Activated CD4-positive, alpha-beta T cell treated with anti-CD3 and anti-CD28 coated beads, Interleukin-2, amount 10 ng/mL, durations not matched to agents 24 days and 14 days (primary cell): ENCODE measurements at regions of chr15 and their contacts with region 1.

Region 1: DNA sequence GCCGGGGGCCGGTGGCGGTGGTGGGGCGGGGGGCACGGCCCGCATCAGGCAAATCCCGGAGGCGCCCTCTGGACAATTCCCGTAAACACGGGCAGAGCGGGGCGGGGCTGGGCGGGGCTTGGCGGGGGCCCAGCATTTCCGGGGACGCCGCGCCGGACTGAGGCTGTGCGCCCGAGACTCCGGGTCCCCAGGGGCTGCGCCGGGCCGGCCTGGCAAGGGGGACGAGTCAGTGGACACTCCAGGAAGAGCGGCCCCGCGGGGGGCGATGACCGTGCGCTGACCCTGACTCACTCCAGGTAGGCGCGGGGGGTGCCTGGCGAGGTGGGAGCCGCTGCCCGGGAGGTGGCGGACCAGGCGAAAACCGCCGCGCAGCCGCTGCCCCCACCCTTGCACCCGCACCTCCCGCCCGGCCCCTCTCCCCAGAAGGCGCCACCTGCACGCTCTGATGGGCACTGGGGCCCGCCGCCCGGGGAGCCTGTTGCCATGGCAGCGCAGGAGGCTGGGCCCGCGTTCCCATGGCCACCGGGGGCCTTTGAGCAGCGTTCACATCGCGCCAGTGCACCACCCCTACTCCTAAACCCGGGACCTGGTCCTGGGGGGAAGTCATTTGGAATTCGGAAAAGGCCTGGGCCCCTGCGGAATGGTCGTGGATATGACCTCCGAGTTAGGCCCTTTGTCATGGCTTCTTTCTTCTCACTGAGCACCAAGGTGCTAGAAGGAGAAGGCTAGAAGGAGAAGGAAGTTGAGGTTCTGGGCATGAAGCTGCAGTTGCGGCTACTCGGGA is 16.2 kb upstream of the SEMA4B start:
- DNase-seq: peak; percentile 91
- H3K4me3 Mint-ChIP-seq: peak overlapping the region; percentile 94
- H3K27ac Mint-ChIP-seq: peak overlapping the region; percentile 85
- H3K4me1 Mint-ChIP-seq: peaks cover 26% of the 10 kb centered on the region
- H3K27me3 Mint-ChIP-seq: peaks cover 2% of the 10 kb centered on the region

Region 2: DNA sequence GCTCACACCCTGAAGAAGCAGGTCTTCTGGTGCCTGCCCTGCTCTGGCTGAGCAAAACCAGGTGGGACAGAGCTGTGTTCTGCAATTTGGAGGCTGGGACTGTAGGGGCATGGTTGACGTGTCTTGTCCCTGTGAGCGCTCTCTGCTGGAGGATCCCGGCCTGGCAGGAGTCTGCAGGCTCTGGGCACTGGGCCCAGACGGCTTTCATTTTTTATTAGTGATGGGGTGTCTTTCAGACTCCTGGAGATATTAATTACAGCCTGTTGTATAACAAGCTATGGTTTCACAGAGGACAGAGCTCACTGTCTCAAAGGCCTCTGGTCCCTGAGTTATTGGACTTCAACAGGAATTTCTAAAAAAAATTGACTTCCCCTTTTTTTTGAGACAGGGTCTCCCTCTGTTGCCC is 213.4 kb before region 1 on chr15:
- intact Hi-C with region 1: no loop called
- DNase-seq: peak; percentile 82
- H3K4me3 Mint-ChIP-seq: no peak overlapping the region
- H3K27ac Mint-ChIP-seq: no peak overlapping the region
- H3K4me1 Mint-ChIP-seq: no peaks in the 10 kb centered on the region
- H3K27me3 Mint-ChIP-seq: peaks cover 13% of the 10 kb centered on the region

Region 3: GRCh38 chr15:90165659-90166421 is 19.1 kb before region 1 on chr15:
- intact Hi-C with region 1: no loop called
- DNase-seq: peak; percentile 75
- H3K4me3 Mint-ChIP-seq: peak overlapping the region; percentile 43
- H3K27ac Mint-ChIP-seq: peak overlapping the region; percentile 80
- H3K4me1 Mint-ChIP-seq: peaks cover 28% of the 10 kb centered on the region
- H3K27me3 Mint-ChIP-seq: peaks cover 4% of the 10 kb centered on the region

Region 4: GRCh38 chr15:90201130-90201949 is 16.4 kb after region 1 on chr15 and contains the start of gene SEMA4B:
- intact Hi-C with region 1: loop called (anchors 2 kb)
- DNase-seq: peak; percentile 94
- H3K4me3 Mint-ChIP-seq: peak within 1 kb of the TSS; percentile 90
- H3K27ac Mint-ChIP-seq: peak within 1 kb of the TSS; percentile 71
- H3K4me1 Mint-ChIP-seq: peaks cover 25% of the 10 kb centered on the region
- H3K27me3 Mint-ChIP-seq: peaks cover 2% of the 10 kb centered on the region
- total RNA-seq, gene SEMA4B: 17.5 and 18.9 TPM in 2 replicates

Region 5: GRCh38 chr15:90249203-90249863 is 64.4 kb after region 1 on chr15 and contains the start of gene TTLL13:
- intact Hi-C with region 1: no loop called
- DNase-seq: peak; percentile 96
- H3K4me3 Mint-ChIP-seq: peak within 1 kb of the TSS; percentile 80
- H3K27ac Mint-ChIP-seq: no peak within 1 kb of the TSS
- H3K4me1 Mint-ChIP-seq: peaks cover 8% of the 10 kb centered on the region
- H3K27me3 Mint-ChIP-seq: no peaks in the 10 kb centered on the region
- total RNA-seq, gene TTLL13: 0.44 and 1.4 TPM in 2 replicates

Region 6: GRCh38 chr15:90286678-90287077 is 101.7 kb after region 1 on chr15:
- intact Hi-C with region 1: no loop called
- DNase-seq: peak; percentile 79
- H3K4me3 Mint-ChIP-seq: no peak overlapping the region
- H3K27ac Mint-ChIP-seq: no peak overlapping the region
- H3K4me1 Mint-ChIP-seq: no peaks in the 10 kb centered on the region
- H3K27me3 Mint-ChIP-seq: no peaks in the 10 kb centered on the region